ENCODE measurements at regions of chr6 and their contacts with region 1.

Region 1: DNA sequence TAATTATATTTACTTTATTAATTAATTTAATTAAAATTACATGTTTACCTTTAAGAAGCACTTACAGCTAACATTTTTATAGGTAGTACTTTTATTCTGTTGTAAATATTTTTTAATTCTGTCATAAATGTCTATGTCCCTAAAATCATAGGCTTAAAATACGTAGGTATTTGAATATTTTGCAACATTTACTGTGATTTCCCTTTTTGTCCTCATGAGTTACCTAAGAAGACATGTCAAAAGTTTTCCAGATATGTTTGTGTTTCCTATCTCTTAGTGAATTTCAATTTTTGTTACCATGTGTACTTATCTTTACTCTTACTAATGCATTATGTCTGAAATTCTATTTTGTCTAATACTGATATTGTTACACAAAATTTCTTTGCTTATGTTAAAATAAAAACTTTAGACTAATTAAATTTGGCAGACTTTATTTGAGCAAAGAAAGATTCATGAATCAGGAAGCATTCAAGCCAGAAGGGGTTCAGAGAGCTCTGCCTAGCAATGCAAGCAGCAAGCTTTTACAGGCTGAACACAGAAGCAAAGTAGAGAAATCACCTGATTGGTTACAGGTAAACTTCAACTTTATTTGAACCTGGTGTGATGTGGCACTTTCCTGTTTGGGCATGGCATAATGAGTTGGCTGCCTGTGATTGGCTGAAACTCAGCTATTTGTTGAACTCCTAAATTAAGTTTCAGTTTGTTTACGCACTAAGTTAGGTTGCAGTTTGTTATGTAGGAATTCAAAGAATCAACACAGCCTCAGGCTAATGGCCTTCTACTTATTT is 123.2 kb upstream of the TMEM170B start:
- DNase-seq: no peak
- ATAC-seq: no peak
- H3K4me3 ChIP-seq: no peak overlapping the region
- H3K27ac ChIP-seq: peak overlapping the region; percentile 12 to 63
- H3K4me1 ChIP-seq: peaks cover 3 to 4% of the 10 kb centered on the region in 2 donors
- H3K27me3 ChIP-seq: no peaks in the 10 kb centered on the region

Region 2: GRCh38 chr6:11353921-11354389 is 60.4 kb before region 1 on chr6:
- intact Hi-C with region 1: loop called (anchors 5 to 10 kb)
- DNase-seq: peak; percentile 79 to 85
- ATAC-seq: peak; percentile 85
- H3K4me3 ChIP-seq: no peak overlapping the region
- H3K27ac ChIP-seq: peak overlapping the region; percentile 90 to 98
- H3K4me1 ChIP-seq: peaks cover 0 to 2% of the 10 kb centered on the region in 2 donors
- H3K27me3 ChIP-seq: no peaks in the 10 kb centered on the region

Region 3: GRCh38 chr6:11381801-11382513 is 32.4 kb before region 1 on chr6:
- intact Hi-C with region 1: no loop called
- DNase-seq: no peak
- ATAC-seq: peak; percentile 52
- H3K4me3 ChIP-seq: no peak overlapping the region
- H3K27ac ChIP-seq: no peak overlapping the region
- H3K4me1 ChIP-seq: peaks cover 4 to 5% of the 10 kb centered on the region in 2 donors
- H3K27me3 ChIP-seq: no peaks in the 10 kb centered on the region

Measured in aorta (tissue), 5 donors.